GM12878 (cell line): ENCODE measurements at regions of chr14 and their contacts with region 1.

Region 1: DNA sequence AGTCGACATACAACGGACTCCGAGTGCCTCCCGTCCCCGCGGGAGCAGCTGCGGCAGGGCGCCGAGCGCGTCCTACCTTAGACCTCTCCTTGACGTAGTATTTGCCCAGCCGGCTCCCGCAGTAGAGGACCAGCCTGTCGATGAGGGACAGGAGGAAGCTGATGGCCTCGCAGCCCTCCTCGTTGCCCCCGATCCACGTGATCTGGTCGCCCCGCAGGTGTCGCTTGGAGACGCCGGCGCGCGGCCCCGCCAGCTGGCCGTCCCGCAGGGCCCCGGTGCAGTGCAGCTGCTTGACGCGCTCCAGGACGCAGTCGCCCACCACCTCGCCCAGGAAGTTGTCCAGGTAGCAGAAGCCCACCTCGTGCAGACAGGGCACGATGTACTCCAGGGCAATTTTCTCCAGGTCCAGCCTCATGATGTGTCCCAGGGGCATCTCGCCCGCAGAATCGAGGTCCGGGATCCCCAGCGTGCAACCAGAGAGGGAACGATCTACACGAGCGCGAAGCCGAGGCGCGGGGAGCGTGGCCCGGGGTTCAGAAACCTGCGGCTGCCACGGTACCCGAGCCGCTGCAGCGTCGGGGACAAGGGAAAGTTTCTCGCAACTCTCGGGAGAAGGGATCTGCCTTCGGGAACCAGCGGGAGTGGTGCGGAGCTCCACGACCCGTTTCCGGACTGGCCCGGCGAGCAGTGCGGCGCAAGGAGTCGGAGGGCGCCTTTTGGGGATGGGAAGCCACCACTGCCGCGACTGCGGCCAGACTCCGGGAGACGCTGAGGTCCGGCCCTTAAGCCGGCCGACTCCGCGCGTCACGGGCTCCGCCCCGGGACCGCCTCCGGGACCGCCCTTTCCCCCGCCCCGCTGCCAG is at the start of gene EGLN3:
- DNase-seq: no peak
- ATAC-seq: peak; percentile 76
- H3K4me3 ChIP-seq: peak within 1 kb of the TSS; percentile 69
- H3K27ac ChIP-seq: no peak within 1 kb of the TSS
- H3K4me1 ChIP-seq: peaks cover 5% of the 10 kb centered on the region; the same call in 1 of the 2 replicates
- H3K27me3 ChIP-seq: peaks cover 0 to 8% of the 10 kb centered on the region in 2 experiments; a peak in 2 of 4 replicates
- CTCF ChIP-seq: no peak
- EP300 ChIP-seq: 0 out of 4 replicates have a peak, but pooled peaks of 1 of the 2 experiments have one; percentile 10
- POLR2A ChIP-seq: peak; percentile 84
- RAD21 ChIP-seq: no peak
- polyA plus RNA-seq, gene EGLN3: 1.4 to 2.1 TPM

Region 2: GRCh38 chr14:33839193-33840076 is 111.1 kb before region 1 on chr14:
- CTCF ChIA-PET with region 1: interaction called, 11 read pairs
- POLR2A ChIA-PET with region 1: no interaction called
- RAD21 ChIA-PET with region 1: interaction called, 34 read pairs
- SMC1A ChIA-PET with region 1: interaction called, 9 read pairs
- in situ Hi-C with region 1: no loop called
- intact Hi-C with region 1: loop called (anchors 10 kb)
- DNase-seq: no peak
- ATAC-seq: peak; percentile 84
- H3K4me3 ChIP-seq: no peak overlapping the region
- H3K27ac ChIP-seq: no peak overlapping the region
- H3K4me1 ChIP-seq: no peaks in the 10 kb centered on the region
- H3K27me3 ChIP-seq: peaks cover 0 to 3% of the 10 kb centered on the region in 2 experiments; a peak in 1 of 4 replicates
- CTCF ChIP-seq: peak; percentile 73 to 85 (median 77)
- EP300 ChIP-seq: no peak
- POLR2A ChIP-seq: no peak
- RAD21 ChIP-seq: peak; percentile 79

Region 3: GRCh38 chr14:33932576-33933345 is 17.8 kb before region 1 on chr14:
- CTCF ChIA-PET with region 1: interaction called, 45 read pairs
- POLR2A ChIA-PET with region 1: interaction called, 13 read pairs
- RAD21 ChIA-PET with region 1: interaction called, 13 read pairs
- SMC1A ChIA-PET with region 1: interaction called, 47 read pairs
- in situ Hi-C with region 1: no loop called
- intact Hi-C with region 1: no loop called
- DNase-seq: no peak
- ATAC-seq: no peak
- H3K4me3 ChIP-seq: no peak overlapping the region
- H3K27ac ChIP-seq: no peak overlapping the region
- H3K4me1 ChIP-seq: no peaks in the 10 kb centered on the region
- H3K27me3 ChIP-seq: no peaks in the 10 kb centered on the region
- CTCF ChIP-seq: no peak
- EP300 ChIP-seq: no peak
- POLR2A ChIP-seq: no peak
- RAD21 ChIP-seq: no peak

Region 4: DNA sequence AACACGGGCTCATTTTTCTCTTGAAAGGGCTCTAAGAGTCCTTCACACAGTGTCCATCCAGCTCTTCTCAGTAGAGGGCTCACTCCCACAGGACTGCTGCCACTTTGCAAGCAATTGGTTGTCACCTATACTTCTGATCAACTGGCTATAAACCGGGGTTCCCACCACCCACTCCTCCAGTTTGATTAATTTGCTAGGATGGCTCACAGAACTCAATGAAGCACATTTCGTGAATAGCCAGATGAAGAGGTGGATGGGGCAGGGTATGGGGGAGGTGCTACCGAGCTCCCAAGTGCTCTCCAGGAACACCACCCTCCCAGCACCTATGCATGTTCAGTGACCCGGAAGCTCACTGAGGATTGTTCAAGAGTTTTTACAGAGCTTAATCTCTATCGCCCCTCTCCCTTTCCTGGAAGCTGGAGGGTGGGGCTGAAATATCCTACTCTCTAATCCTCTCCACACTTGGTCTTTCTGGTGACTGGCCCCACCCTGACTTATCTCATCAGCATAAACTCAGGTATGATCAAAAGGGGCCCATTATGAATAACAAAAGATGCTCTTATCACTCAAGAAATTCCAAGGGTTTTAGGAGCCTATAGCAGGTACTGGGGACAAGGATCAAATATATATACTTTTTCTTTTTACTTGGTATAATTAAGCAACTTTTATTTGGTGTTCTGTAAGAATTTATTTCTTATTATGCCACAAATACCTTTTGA is 14.2 kb after region 1 on chr14:
- CTCF ChIA-PET with region 1: interaction called, 10 read pairs
- POLR2A ChIA-PET with region 1: interaction called, 5 read pairs
- RAD21 ChIA-PET with region 1: interaction called, 35 read pairs
- SMC1A ChIA-PET with region 1: interaction called, 13 read pairs
- in situ Hi-C with region 1: no loop called
- intact Hi-C with region 1: no loop called
- DNase-seq: no peak
- ATAC-seq: peak; percentile 30; the same call in 2 of the 3 replicates
- H3K4me3 ChIP-seq: no peak overlapping the region
- H3K27ac ChIP-seq: no peak overlapping the region
- H3K4me1 ChIP-seq: no peaks in the 10 kb centered on the region
- H3K27me3 ChIP-seq: no peaks in the 10 kb centered on the region
- CTCF ChIP-seq: no peak; a peak in 1 of 6 replicates
- EP300 ChIP-seq: no peak
- POLR2A ChIP-seq: no peak
- RAD21 ChIP-seq: no peak

Region 5: GRCh38 chr14:34012978-34013720 is 62.6 kb after region 1 on chr14:
- CTCF ChIA-PET with region 1: interaction called, 9 read pairs
- POLR2A ChIA-PET with region 1: interaction called, 8 read pairs
- RAD21 ChIA-PET with region 1: interaction called, 29 read pairs
- SMC1A ChIA-PET with region 1: interaction called, 57 read pairs
- in situ Hi-C with region 1: no loop called
- intact Hi-C with region 1: no loop called
- DNase-seq: peak; percentile 76
- ATAC-seq: peak; percentile 86
- H3K4me3 ChIP-seq: peak overlapping the region; percentile 41; the same call in 1 of the 2 replicates
- H3K27ac ChIP-seq: peak overlapping the region; percentile 70
- H3K4me1 ChIP-seq: peaks cover 18% of the 10 kb centered on the region
- H3K27me3 ChIP-seq: no peaks in the 10 kb centered on the region
- CTCF ChIP-seq: no peak
- EP300 ChIP-seq: no peak
- POLR2A ChIP-seq: no peak
- RAD21 ChIP-seq: no peak

Region 6: DNA sequence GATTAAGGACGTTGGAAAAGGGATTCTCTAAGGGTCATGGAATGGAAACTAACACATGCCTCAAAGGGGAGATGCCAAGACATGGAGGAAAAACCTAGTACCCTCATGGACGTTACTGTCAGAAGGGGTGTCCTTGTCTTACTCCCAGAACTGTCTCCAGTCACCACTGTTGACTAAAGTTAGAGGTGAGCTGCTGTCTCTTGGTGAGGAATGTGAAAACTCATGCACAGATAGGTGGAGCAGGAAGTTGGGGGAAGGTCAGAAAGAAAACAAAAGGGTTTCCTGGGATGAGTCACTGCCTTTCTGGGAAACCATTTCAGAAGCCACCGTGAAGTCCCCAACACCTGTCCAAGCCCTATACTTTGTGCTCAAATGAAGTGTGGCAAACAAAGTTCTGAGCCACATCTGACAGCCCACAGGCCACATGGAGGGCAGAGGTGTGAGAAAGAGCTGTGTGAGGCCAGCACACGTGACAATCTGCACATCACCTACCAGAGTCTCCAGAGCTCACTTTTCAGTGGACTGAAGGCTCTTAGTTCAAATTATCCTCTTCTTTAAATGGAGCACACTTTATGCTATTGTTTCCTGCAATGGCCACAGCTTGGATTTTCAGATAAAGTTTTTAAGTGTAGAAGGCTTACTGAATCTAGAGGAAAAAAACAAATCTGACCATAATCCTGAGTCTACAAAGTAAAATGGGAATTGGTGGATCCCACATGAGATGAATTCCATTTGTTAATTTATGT is 93.2 kb after region 1 on chr14:
- CTCF ChIA-PET with region 1: interaction called, 4 read pairs
- POLR2A ChIA-PET with region 1: interaction called, 4 read pairs
- RAD21 ChIA-PET with region 1: interaction called, 3 read pairs
- SMC1A ChIA-PET with region 1: interaction called, 12 read pairs
- in situ Hi-C with region 1: no loop called
- intact Hi-C with region 1: no loop called
- DNase-seq: peak; percentile 97
- ATAC-seq: peak; percentile 97
- H3K4me3 ChIP-seq: peak overlapping the region; percentile 21; the same call in 1 of the 2 replicates
- H3K27ac ChIP-seq: 0 out of 2 replicates have a peak overlapping the region, but pooled peaks have one; percentile 22
- H3K4me1 ChIP-seq: peaks cover 36% of the 10 kb centered on the region
- H3K27me3 ChIP-seq: no peaks in the 10 kb centered on the region
- CTCF ChIP-seq: no peak
- EP300 ChIP-seq: peak; percentile 89 to 92
- POLR2A ChIP-seq: no peak
- RAD21 ChIP-seq: no peak

Region 7: DNA sequence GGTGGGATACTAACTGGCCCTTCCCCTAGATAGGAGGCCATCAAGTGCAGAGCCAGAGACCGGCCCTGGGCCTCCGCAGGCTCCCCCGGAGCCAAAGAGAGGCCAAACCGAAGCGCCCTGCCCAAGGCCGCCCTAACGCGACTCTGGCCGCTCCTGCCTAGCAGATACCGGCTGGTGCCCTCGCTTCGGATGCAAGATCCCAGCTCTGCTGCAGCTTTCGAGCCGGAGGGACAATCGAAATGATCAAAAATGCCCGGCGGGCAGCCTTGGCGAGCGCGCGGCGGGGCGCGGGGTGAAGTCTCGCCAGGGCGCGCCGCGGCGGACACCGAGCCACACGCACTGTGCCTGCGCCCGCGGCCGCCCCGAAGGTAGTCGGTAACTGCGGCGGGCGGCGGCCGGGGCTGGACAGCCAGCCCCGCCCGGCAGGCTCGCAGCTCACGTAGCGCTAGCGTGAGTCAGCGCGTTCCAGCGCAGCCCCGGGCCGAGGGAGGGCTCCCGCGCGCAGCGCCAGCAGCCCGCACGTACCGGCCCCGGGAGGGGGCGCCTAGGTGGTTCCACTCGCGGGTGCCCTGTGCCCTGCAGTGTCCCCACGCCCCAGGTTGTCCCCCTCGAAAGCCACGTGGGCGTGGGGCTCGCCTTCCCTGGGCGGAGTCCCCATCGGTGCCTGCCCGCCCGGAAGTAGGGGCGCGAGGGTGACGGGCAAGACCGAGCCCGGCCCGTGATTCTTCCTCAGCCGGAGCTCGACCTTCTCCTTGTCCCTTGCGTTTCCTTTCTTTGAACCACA is 109.5 kb after region 1 on chr14:
- CTCF ChIA-PET with region 1: interaction called, 10 read pairs
- POLR2A ChIA-PET with region 1: interaction called, 9 read pairs
- RAD21 ChIA-PET with region 1: interaction called, 9 read pairs
- SMC1A ChIA-PET with region 1: interaction called, 9 read pairs
- in situ Hi-C with region 1: no loop called
- intact Hi-C with region 1: no loop called
- DNase-seq: no peak
- ATAC-seq: peak; percentile 91
- H3K4me3 ChIP-seq: peak overlapping the region; percentile 57; the same call in 1 of the 2 replicates
- H3K27ac ChIP-seq: peak overlapping the region; percentile 52; the same call in 1 of the 2 replicates
- H3K4me1 ChIP-seq: peaks cover 20% of the 10 kb centered on the region
- H3K27me3 ChIP-seq: no peaks in the 10 kb centered on the region
- CTCF ChIP-seq: peak in 2 of 3 experiments; percentile 25 to 39; a peak in 3 of 6 replicates
- EP300 ChIP-seq: 0 out of 4 replicates have a peak, but pooled peaks of 1 of the 2 experiments have one; percentile 42
- POLR2A ChIP-seq: peak; percentile 83
- RAD21 ChIP-seq: 0 out of 2 replicates have a peak, but pooled peaks have one; percentile 6